ENCODE measurements at regions of chr1 and their contacts with region 1.

Region 1: DNA sequence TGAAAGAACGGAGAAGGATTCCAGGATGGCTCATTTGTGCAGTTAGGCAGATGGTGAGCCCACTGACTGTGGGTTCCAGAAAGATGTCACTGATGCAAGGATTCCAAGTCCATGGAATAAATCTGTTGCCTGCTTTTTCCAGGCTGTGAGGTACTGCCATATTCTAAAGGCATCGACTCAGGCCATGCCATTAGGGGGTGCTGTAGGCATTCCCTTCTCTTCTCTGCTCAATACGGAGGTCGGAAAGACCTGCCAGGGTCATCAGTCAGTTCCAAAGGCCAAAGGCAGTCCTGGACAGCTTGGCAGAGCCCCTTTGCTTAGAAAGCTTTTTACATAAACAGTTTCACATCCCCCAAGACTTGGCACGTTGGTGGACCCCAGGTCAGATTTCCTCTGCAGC is 31.7 kb upstream of the TMEM125 start:
- DNase-seq: peak; percentile 54
- ATAC-seq: peak; percentile 95
- H3K4me3 ChIP-seq: no peak overlapping the region
- H3K27ac ChIP-seq: no peak overlapping the region
- H3K4me1 ChIP-seq: peaks cover 0 to 10% of the 10 kb centered on the region in 2 experiments; a peak in 2 of 4 replicates
- H3K27me3 ChIP-seq: no peaks in the 10 kb centered on the region
- CTCF ChIP-seq: peak; percentile 85 to 91 (median 87)
- POLR2A ChIP-seq: no peak
- RAD21 ChIP-seq: peak; percentile 99

Region 2: GRCh38 chr1:43348809-43349583 is 110.9 kb after region 1 on chr1:
- CTCF ChIA-PET with region 1: no interaction called
- POLR2A ChIA-PET with region 1: no interaction called
- RAD21 ChIA-PET with region 1: no interaction called
- intact Hi-C with region 1: loop called (anchors 2 kb)
- DNase-seq: peak; percentile 85
- ATAC-seq: peak; percentile 87
- H3K4me3 ChIP-seq: peak overlapping the region; percentile 59 to 65
- H3K27ac ChIP-seq: peak overlapping the region; percentile 89
- H3K4me1 ChIP-seq: peaks cover 30 to 64% of the 10 kb centered on the region in 2 experiments
- H3K27me3 ChIP-seq: no peaks in the 10 kb centered on the region
- CTCF ChIP-seq: no peak
- POLR2A ChIP-seq: peak; percentile 15
- RAD21 ChIP-seq: peak; percentile 15; the same call in 1 of the 2 replicates

Region 3: DNA sequence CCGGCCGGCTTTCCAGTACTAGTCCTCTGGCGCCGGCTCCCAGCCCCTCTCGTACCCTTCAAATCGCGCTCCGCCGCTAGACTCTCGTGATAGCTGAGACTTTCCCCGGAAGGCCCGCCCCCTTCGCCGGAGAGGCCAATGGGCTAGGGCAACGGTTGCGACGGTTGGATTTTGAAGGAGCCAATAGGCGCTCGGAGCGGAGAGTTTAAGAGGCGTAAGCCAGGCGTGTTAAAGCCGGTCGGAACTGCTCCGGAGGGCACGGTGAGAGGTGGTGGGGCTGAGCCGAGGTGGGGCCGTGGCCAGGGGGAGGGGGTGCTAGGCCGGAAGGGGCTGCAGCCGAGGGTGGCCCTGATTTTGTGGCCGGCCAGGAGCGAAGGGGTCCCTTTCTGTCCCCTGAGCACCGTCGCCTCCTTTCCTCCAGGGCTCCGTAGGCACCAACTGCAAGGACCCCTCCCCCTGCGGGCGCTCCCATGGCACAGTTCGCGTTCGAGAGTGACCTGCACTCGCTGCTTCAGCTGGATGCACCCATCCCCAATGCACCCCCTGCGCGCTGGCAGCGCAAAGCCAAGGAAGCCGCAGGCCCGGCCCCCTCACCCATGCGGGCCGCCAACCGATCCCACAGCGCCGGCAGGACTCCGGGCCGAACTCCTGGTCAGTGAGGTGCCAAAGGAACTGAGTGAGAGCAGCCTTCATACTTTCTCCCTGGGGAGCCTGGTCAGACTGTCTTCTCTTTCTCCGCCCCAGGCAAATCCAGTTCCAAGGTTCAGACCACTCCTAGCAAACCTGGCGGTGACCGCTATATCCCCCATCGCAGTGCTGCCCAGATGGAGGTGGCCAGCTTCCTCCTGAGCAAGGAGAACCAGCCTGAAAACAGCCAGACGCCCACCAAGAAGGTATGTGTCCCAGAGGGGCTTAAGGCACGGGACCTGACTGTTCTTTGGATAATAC is 120.9 kb after region 1 on chr1 and contains the start of gene CDC20:
- CTCF ChIA-PET with region 1: interaction called, 4 read pairs
- POLR2A ChIA-PET with region 1: interaction called, 5 read pairs
- RAD21 ChIA-PET with region 1: no interaction called
- intact Hi-C with region 1: loop called (anchors 1 kb)
- DNase-seq: peak; percentile 96
- ATAC-seq: peak; percentile 92
- H3K4me3 ChIP-seq: peak within 1 kb of the TSS; percentile 76 to 91
- H3K27ac ChIP-seq: peak within 1 kb of the TSS; percentile 80
- H3K4me1 ChIP-seq: peaks cover 13 to 53% of the 10 kb centered on the region in 2 experiments
- H3K27me3 ChIP-seq: no peaks in the 10 kb centered on the region
- CTCF ChIP-seq: no peak
- POLR2A ChIP-seq: peak; percentile 76
- RAD21 ChIP-seq: no peak
- total RNA-seq, gene CDC20: 355 TPM

Region 4: GRCh38 chr1:43383449-43383848 is 145.4 kb after region 1 on chr1:
- CTCF ChIA-PET with region 1: interaction called, 7 read pairs
- POLR2A ChIA-PET with region 1: no interaction called
- RAD21 ChIA-PET with region 1: no interaction called
- intact Hi-C with region 1: loop called (anchors 1 kb)
- DNase-seq: no peak
- ATAC-seq: peak; percentile 67
- H3K4me3 ChIP-seq: no peak overlapping the region
- H3K27ac ChIP-seq: no peak overlapping the region
- H3K4me1 ChIP-seq: peaks cover under 1 to 3% of the 10 kb centered on the region in 2 experiments; a peak in 3 of 4 replicates
- H3K27me3 ChIP-seq: no peaks in the 10 kb centered on the region
- CTCF ChIP-seq: peak; percentile 43 to 49 (median 45); a peak in 4 of 6 replicates
- POLR2A ChIP-seq: no peak
- RAD21 ChIP-seq: peak; percentile 79

Region 5: GRCh38 chr1:43414634-43415223 is 176.6 kb after region 1 on chr1:
- CTCF ChIA-PET with region 1: interaction called, 17 read pairs
- POLR2A ChIA-PET with region 1: no interaction called
- RAD21 ChIA-PET with region 1: interaction called, 3 to 10 read pairs
- intact Hi-C with region 1: loop called (anchors 1 kb)
- DNase-seq: peak; percentile 48
- ATAC-seq: peak; percentile 96
- H3K4me3 ChIP-seq: no peak overlapping the region
- H3K27ac ChIP-seq: no peak overlapping the region
- H3K4me1 ChIP-seq: no peaks in the 10 kb centered on the region
- H3K27me3 ChIP-seq: no peaks in the 10 kb centered on the region
- CTCF ChIP-seq: peak; percentile 69 to 77 (median 74); a peak in 5 of 6 replicates
- POLR2A ChIP-seq: no peak
- RAD21 ChIP-seq: peak; percentile 89